ENCODE measurements at regions of chr6 and their contacts with region 1.

Region 1: GRCh38 chr6:27388293-27389197 is at the start of gene ZNF391:
- DNase-seq: peak; percentile 81
- ATAC-seq: peak; percentile 95
- H3K4me3 Mint-ChIP-seq: peak within 1 kb of the TSS; percentile 95
- H3K27ac Mint-ChIP-seq: peak within 1 kb of the TSS; percentile 93
- H3K4me1 Mint-ChIP-seq: peaks cover 14% of the 10 kb centered on the region
- H3K27me3 Mint-ChIP-seq: peaks cover 6% of the 10 kb centered on the region
- total RNA-seq, gene ZNF391: 4.3 to 6.2 TPM

Region 2: GRCh38 chr6:27374824-27375612 is 13.5 kb before region 1 on chr6:
- CTCF ChIA-PET with region 1: interaction called, 3 read pairs
- POLR2A ChIA-PET with region 1: no interaction called
- intact Hi-C with region 1: loop called (anchors 1 to 2 kb)
- DNase-seq: peak; percentile 86
- ATAC-seq: peak; percentile 100
- H3K4me3 Mint-ChIP-seq: peak overlapping the region; percentile 80
- H3K27ac Mint-ChIP-seq: peak overlapping the region; percentile 72
- H3K4me1 Mint-ChIP-seq: peaks cover 20% of the 10 kb centered on the region
- H3K27me3 Mint-ChIP-seq: no peaks in the 10 kb centered on the region

Region 3: DNA sequence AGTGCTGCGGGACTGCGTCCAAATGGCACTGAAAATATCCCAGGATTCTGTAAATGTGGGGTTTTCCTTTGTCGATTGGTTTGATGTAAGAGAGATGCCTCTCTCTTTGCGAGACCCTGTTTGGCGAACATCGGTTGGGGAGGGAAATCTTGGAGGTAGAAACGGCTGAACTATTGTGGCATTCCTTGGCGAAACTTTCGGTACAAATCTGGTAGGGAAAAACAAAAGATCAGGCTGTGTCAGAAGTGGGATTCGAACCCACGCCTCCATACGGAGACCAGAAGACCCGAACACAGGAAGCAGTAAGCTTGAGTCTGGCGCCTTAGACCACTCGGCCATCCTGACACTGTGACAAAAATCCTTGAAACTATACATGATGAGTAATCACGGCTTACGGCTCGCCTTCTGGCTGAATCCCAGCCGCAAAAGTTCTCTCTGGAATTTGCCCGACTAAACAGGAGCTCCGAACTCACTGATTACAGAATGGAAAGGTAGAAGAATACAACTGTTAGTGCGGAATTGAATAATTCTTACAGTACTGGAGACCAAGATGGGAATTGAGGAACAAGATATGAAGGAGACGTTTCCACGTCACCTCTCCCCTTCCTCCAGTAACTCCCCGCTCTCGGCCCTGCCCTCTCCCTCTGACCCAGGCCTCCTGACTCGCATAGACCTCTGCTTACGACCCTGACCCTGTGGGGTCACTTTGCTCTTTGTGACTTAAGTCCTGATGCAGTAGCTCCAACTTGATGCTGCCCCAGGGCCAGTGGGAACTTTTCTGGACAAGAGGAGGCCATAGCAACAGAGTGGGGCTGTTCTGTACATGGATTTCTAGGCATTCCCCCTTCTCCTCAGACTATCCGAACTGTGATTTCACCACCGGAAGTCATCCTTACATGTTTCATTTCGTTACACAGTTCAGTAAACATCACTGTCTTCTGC is 217.1 kb after region 1 on chr6:
- CTCF ChIA-PET with region 1: no interaction called
- POLR2A ChIA-PET with region 1: no interaction called
- intact Hi-C with region 1: no loop called
- DNase-seq: peak; percentile 53
- ATAC-seq: no peak
- H3K4me3 Mint-ChIP-seq: peak overlapping the region; percentile 46
- H3K27ac Mint-ChIP-seq: peak overlapping the region; percentile 14
- H3K4me1 Mint-ChIP-seq: peaks cover 23% of the 10 kb centered on the region
- H3K27me3 Mint-ChIP-seq: peaks cover 45% of the 10 kb centered on the region

Measured in activated CD4-positive, alpha-beta T cell treated with anti-CD3 and anti-CD28 coated beads for 36 hours (primary cell).